Spleen (tissue), 13 donors: ENCODE measurements at regions of chr17 and their contacts with region 1.

Region 1: GRCh38 chr17:47889734-47890529 is 6.1 kb upstream of the SP2 start:
- DNase-seq: peak; percentile 96
- H3K4me3 ChIP-seq: no peak overlapping the region
- H3K27ac ChIP-seq: no peak overlapping the region
- H3K4me1 ChIP-seq: peaks cover 0 to 49% (median 26%) of the 10 kb centered on the region in 6 donors
- H3K27me3 ChIP-seq: no peaks in the 10 kb centered on the region
- CTCF ChIP-seq: peak; percentile 84 to 98 (median 94)
- POLR2A ChIP-seq: no peak

Region 2: GRCh38 chr17:47742319-47743181 is 147.4 kb before region 1 on chr17:
- intact Hi-C with region 1: no loop called
- DNase-seq: peak; percentile 81
- H3K4me3 ChIP-seq: peak overlapping the region in 1 of 8 donors; percentile 40
- H3K27ac ChIP-seq: peak overlapping the region in 2 of 8 donors; percentile 21 to 71
- H3K4me1 ChIP-seq: peaks cover 0 to 41% (median 18%) of the 10 kb centered on the region in 6 donors
- H3K27me3 ChIP-seq: peaks cover 0 to 40% (median 0%) of the 10 kb centered on the region in 7 donors
- CTCF ChIP-seq: peak in 10 of 11 experiments; percentile 6 to 69 (median 47)
- POLR2A ChIP-seq: no peak

Region 3: DNA sequence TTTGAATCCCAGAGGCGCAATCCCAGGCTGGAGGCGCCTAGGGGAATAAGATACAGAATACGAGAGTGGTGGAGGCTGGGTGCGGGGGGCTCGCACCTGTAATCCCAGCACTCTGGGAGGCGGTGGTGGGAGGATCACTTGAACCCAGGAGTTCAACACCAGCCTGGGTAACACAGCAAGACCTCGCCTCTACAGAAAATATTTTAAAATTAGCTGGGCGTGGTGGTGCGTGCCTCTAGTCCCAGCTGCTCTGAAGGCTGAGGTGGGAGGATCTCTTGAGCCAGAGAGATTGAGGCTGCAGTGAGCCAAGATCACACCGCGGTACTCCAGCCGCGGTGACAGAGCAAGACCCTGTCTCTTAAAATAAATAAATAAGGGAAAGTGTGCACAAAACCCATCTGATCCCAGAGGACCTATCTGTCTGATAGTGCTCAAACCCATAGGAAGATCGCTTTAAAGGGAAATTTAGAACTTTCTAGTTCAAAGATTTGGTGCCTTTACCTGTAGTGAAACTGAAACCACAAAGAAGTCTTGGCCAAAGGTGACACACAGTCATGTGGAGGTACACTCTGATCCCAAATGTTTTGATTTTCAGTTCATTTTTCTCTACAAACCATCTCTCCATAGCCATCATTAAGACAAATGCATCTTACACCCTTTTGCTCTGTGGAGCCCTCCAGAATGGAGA is 48.2 kb before region 1 on chr17:
- intact Hi-C with region 1: loop called (anchors 2 kb)
- DNase-seq: no peak
- H3K4me3 ChIP-seq: peak overlapping the region in 4 of 8 donors; percentile 74 to 86 (median 78)
- H3K27ac ChIP-seq: peak overlapping the region; percentile 65 to 84 (median 80)
- H3K4me1 ChIP-seq: peaks cover 21 to 69% (median 50%) of the 10 kb centered on the region in 6 donors
- H3K27me3 ChIP-seq: peaks cover 0 to 31% (median 7%) of the 10 kb centered on the region in 7 donors
- CTCF ChIP-seq: no peak
- POLR2A ChIP-seq: no peak